Endothelial cell of umbilical vein (primary cell): ENCODE measurements at regions of chr11 and their contacts with region 1.

Region 1: DNA sequence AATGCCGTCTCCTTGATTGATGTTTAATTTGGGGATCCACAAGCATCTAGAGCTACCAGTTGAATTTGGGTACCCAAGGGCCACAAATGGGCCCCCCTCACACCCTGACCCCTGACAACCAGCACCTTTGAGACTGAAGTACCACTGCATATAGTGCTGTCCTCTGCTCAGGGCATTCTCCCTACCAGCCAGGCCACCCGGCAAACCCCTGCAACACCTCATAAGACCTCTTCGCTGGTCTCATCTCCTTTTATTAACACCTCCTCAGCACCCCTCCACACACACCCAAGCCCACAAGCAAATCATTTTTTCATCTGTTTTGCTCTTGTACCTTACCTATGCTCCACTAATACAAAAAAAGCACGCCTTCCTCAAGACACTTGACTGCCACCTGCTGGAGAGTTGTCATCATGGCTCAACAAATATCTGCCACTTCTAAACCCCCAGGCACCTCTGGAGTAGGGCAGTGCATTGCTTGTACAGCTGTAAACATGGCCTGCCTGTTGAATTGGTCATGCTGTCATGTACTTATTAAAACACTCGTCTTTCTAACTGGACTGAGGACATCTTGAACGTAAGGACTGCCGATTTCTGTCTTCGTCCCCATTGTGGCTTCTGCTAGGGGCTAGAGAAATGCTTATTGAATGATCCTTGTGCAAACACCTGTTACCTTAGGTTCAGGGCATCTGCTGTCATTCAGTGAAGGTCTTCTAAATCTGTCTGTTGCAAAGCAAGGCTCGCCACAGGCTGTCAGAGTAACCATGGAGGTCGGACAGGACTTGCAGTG is 66.5 kb downstream of the BMAL1 start:
- DNase-seq: peak; percentile 70
- H3K4me3 ChIP-seq: no peak overlapping the region
- H3K27ac ChIP-seq: no peak overlapping the region
- H3K4me1 ChIP-seq: peaks cover 8% of the 10 kb centered on the region
- H3K27me3 ChIP-seq: no peaks in the 10 kb centered on the region
- CTCF ChIP-seq: peak; percentile 73 to 78
- POLR2A ChIP-seq: no peak

Region 2: DNA sequence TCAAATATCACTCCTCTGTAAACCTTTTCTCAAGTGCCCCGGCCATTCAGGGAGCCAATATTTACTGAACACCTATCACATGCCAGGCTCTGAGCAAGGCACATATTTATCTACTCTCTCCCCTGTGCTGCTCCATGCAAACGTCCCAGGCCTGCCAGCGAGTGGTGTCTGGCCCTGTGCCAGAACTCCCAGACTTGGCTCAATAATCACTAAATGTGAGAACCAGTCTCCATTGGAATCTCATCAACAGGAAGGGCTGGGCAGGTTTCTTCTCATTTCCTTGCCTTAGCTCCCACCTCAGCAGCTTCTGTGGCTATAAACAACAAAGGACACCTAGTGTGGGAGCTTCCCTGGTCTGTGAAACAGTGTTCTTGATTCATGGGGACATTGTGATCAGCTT is 313.3 kb before region 1 on chr11:
- CTCF ChIA-PET with region 1: no interaction called
- POLR2A ChIA-PET with region 1: no interaction called
- dilution Hi-C with region 1: no loop called
- intact Hi-C with region 1: no loop called
- DNase-seq: peak; percentile 26
- H3K4me3 ChIP-seq: no peak overlapping the region
- H3K27ac ChIP-seq: no peak overlapping the region
- H3K4me1 ChIP-seq: no peaks in the 10 kb centered on the region
- H3K27me3 ChIP-seq: peaks cover 19 to 30% of the 10 kb centered on the region in 2 experiments
- CTCF ChIP-seq: no peak
- POLR2A ChIP-seq: no peak

Region 3: DNA sequence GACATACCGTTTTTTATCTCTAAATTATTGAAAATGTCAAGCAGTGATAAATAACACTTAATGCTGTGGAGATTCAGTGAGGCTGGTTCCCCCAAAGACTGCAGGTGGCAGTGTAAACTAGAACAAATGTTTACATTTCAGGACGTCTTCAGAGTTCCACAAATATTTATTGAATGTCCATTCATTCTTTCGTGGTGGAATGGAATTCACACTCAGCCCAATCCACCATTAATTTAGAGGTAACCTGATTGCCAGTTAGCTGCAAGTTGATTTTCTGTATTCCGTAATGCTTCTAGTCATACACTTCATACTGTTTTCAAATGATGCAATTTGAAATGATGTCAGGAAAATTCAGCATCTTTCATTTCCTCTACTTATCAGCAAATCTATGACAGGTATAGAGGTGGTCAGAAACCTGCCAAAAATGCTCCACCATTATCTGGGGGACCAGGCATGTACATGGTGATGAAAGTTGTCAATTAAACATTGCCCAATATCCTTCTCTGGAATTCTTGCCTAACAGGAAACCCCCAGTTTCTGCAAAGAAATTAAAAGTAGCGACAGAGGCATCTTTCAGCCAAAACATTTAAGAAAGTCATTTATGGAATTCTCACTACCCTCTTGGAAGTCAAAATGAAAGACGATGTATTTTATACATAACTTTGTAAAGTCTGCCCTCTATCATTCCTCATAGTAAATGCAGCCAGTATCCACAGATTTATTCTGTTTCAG is 160.9 kb before region 1 on chr11:
- CTCF ChIA-PET with region 1: interaction called, 5 read pairs
- POLR2A ChIA-PET with region 1: no interaction called
- dilution Hi-C with region 1: no loop called
- intact Hi-C with region 1: loop called (anchors 1 kb)
- DNase-seq: peak; percentile 56
- H3K4me3 ChIP-seq: no peak overlapping the region
- H3K27ac ChIP-seq: no peak overlapping the region
- H3K4me1 ChIP-seq: peaks cover 6% of the 10 kb centered on the region
- H3K27me3 ChIP-seq: peaks cover 8 to 12% of the 10 kb centered on the region in 2 experiments
- CTCF ChIP-seq: peak; percentile 34 to 46
- POLR2A ChIP-seq: no peak

Region 4: DNA sequence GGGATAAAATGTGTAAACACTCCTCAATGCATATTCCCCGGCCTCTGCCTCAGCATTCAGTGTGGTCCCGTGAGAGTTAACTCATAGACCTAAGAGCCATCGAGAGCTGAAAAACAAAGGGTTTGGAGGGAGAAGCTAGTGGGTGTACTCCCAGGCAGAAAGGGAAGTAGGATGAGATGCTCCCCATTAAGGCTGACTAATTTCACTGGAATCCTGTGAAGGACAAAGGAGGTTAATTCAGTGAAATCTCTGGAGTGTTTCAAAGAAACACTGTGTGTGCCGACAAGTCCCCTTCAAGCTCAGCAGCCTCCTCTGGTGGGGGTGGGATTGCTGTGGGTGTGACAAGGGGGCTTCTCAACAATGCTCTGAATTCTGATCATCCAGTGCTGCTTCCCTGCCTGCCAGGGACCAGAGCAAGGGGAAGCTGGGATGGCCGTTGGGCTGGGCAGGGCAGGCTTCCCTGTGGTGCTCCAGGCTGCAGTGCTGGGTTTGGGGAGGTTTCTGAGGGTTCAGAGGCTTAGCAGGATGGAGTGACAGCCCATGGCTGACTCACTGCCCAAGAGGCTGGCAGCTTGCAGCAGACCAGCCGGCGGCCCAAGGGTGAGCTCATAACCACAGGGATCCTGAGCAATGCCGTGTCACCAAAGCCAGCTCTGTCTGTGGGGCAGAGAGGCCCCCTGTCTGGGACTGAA is 128.0 kb before region 1 on chr11:
- CTCF ChIA-PET with region 1: interaction called, 180 read pairs
- POLR2A ChIA-PET with region 1: no interaction called
- dilution Hi-C with region 1: no loop called
- intact Hi-C with region 1: loop called (anchors 1 kb)
- DNase-seq: peak; percentile 66
- H3K4me3 ChIP-seq: peak overlapping the region in 1 of 3 experiments; percentile 17
- H3K27ac ChIP-seq: peak overlapping the region; percentile 99
- H3K4me1 ChIP-seq: peaks cover 20% of the 10 kb centered on the region
- H3K27me3 ChIP-seq: no peaks in the 10 kb centered on the region
- CTCF ChIP-seq: no peak
- POLR2A ChIP-seq: peak; percentile 53

Region 5: DNA sequence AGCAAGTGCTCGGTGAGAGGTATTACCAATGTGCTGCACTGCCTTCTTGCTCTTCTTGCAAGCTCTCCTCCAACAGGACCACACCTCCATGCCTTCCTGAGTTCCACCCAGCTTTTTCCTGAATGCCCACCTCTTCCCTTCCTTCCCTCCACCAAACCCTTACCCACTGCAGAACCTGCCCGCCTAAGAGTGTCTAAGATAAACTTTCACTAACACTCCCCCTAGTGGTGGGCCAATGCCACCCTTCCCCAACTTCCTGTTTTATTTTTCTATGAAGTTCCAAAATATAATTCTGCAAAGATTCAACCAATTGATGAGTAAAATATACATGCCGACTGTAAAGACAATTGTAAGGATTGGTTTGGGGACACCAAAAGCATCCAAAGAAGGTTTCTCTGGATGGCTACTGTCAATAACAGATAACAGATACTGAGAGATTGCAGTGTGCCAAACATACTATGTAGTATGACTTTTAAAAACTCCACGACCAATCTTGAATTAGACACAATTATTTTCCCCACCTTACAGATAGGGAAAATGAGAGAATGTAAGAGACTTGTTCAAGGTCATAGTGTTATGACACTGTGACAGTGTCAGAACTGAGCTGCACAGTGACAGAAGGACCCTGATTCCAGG is 105.1 kb before region 1 on chr11:
- CTCF ChIA-PET with region 1: interaction called, 8 read pairs
- POLR2A ChIA-PET with region 1: no interaction called
- dilution Hi-C with region 1: no loop called
- intact Hi-C with region 1: loop called (anchors 1 kb)
- DNase-seq: peak; percentile 38
- H3K4me3 ChIP-seq: no peak overlapping the region
- H3K27ac ChIP-seq: no peak overlapping the region
- H3K4me1 ChIP-seq: no peaks in the 10 kb centered on the region
- H3K27me3 ChIP-seq: peaks cover 11 to 20% of the 10 kb centered on the region in 2 experiments
- CTCF ChIP-seq: peak; percentile 74 to 81
- POLR2A ChIP-seq: no peak

Region 6: GRCh38 chr11:13249996-13250395 is 94.1 kb before region 1 on chr11:
- CTCF ChIA-PET with region 1: interaction called, 25 read pairs
- POLR2A ChIA-PET with region 1: no interaction called
- dilution Hi-C with region 1: no loop called
- intact Hi-C with region 1: loop called (anchors 1 kb)
- DNase-seq: peak; percentile 3
- H3K4me3 ChIP-seq: no peak overlapping the region
- H3K27ac ChIP-seq: no peak overlapping the region
- H3K4me1 ChIP-seq: no peaks in the 10 kb centered on the region
- H3K27me3 ChIP-seq: peaks cover 24 to 25% of the 10 kb centered on the region in 2 experiments
- CTCF ChIP-seq: no peak
- POLR2A ChIP-seq: no peak

Region 7: GRCh38 chr11:13354335-13354734 is 10.2 kb after region 1 on chr11:
- CTCF ChIA-PET with region 1: interaction called, 17 read pairs
- POLR2A ChIA-PET with region 1: no interaction called
- dilution Hi-C with region 1: no loop called
- intact Hi-C with region 1: no loop called
- DNase-seq: peak; percentile 44
- H3K4me3 ChIP-seq: no peak overlapping the region
- H3K27ac ChIP-seq: no peak overlapping the region
- H3K4me1 ChIP-seq: no peaks in the 10 kb centered on the region
- H3K27me3 ChIP-seq: no peaks in the 10 kb centered on the region
- CTCF ChIP-seq: peak; percentile 45 to 46
- POLR2A ChIP-seq: no peak